Endothelial cell of umbilical vein (primary cell): ENCODE measurements at regions of chr7 and their contacts with region 1.

Region 1: GRCh38 chr7:126803060-126803665 is 449.6 kb downstream of the GRM8 start:
- DNase-seq: peak; percentile 65
- H3K4me3 ChIP-seq: no peak overlapping the region
- H3K27ac ChIP-seq: no peak overlapping the region
- H3K4me1 ChIP-seq: no peaks in the 10 kb centered on the region
- H3K27me3 ChIP-seq: no peaks in the 10 kb centered on the region
- CTCF ChIP-seq: peak; percentile 43
- POLR2A ChIP-seq: no peak

Region 2: DNA sequence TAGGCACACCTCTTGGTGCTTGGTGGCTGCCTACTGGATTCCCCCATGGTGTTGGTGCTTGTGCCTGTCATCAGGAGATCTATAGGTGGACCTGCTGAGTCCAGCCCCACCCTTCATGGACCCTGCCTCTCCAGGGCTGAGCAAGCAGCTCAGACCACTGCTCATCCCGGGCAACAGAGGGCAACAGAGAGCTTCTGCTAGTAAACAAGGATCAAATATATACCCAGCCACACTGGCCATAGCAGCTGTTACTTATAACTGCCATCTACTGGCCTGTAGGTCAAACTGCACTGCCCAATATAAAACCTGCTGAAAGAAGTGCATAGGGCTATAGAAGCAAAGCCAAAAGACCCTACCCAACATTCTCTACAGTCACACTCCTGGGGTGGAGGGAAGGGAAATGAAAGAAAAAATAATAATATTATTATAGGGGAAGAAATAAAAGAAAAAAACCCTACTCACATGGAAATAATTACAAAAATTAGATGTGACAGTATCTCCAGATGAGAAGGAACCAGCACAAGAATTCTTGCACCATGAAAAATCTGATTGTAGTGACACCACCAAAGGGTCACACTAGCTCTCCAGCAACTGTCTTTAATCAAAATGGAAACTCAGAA is 644.3 kb after region 1 on chr7:
- CTCF ChIA-PET with region 1: interaction called, 32 read pairs
- POLR2A ChIA-PET with region 1: no interaction called
- dilution Hi-C with region 1: no loop called
- intact Hi-C with region 1: loop called (anchors 1 kb)
- DNase-seq: peak; percentile 32
- H3K4me3 ChIP-seq: no peak overlapping the region
- H3K27ac ChIP-seq: no peak overlapping the region
- H3K4me1 ChIP-seq: no peaks in the 10 kb centered on the region
- H3K27me3 ChIP-seq: no peaks in the 10 kb centered on the region
- CTCF ChIP-seq: peak; percentile 47 to 60
- POLR2A ChIP-seq: no peak

Region 3: GRCh38 chr7:127514499-127514898 is 711.3 kb after region 1 on chr7:
- CTCF ChIA-PET with region 1: interaction called, 7 read pairs
- POLR2A ChIA-PET with region 1: no interaction called
- dilution Hi-C with region 1: no loop called
- intact Hi-C with region 1: loop called (anchors 5 kb)
- DNase-seq: peak; percentile 21
- H3K4me3 ChIP-seq: no peak overlapping the region
- H3K27ac ChIP-seq: no peak overlapping the region
- H3K4me1 ChIP-seq: no peaks in the 10 kb centered on the region
- H3K27me3 ChIP-seq: peaks cover 0 to 3% of the 10 kb centered on the region in 2 experiments
- CTCF ChIP-seq: no peak
- POLR2A ChIP-seq: no peak